PC-9 (cell line): ENCODE measurements at regions of chr10 and their contacts with region 1.

Region 1: GRCh38 chr10:6667679-6668270 is 87.7 kb upstream of the PRKCQ start:
- DNase-seq: peak; percentile 27 to 36
- H3K4me3 ChIP-seq: no peak overlapping the region
- H3K27ac ChIP-seq: no peak overlapping the region
- H3K4me1 ChIP-seq: no peaks in the 10 kb centered on the region
- H3K27me3 ChIP-seq: no peaks in the 10 kb centered on the region
- CTCF ChIP-seq: peak; percentile 64

Region 2: GRCh38 chr10:6202684-6203330 is 465.0 kb before region 1 on chr10 and contains the start of gene PFKFB3:
- CTCF ChIA-PET with region 1: no interaction called
- POLR2A ChIA-PET with region 1: no interaction called
- intact Hi-C with region 1: loop called (anchors 10 kb)
- DNase-seq: peak; percentile 73 to 96
- H3K4me3 ChIP-seq: peak within 1 kb of the TSS; percentile 90
- H3K27ac ChIP-seq: peak within 1 kb of the TSS; percentile 55
- H3K4me1 ChIP-seq: peaks cover 14% of the 10 kb centered on the region; the same call in 1 of the 2 replicates
- H3K27me3 ChIP-seq: no peaks in the 10 kb centered on the region
- CTCF ChIP-seq: peak; percentile 81
- total RNA-seq, gene PFKFB3: 37.8 and 54.7 TPM in 2 replicates

Region 3: DNA sequence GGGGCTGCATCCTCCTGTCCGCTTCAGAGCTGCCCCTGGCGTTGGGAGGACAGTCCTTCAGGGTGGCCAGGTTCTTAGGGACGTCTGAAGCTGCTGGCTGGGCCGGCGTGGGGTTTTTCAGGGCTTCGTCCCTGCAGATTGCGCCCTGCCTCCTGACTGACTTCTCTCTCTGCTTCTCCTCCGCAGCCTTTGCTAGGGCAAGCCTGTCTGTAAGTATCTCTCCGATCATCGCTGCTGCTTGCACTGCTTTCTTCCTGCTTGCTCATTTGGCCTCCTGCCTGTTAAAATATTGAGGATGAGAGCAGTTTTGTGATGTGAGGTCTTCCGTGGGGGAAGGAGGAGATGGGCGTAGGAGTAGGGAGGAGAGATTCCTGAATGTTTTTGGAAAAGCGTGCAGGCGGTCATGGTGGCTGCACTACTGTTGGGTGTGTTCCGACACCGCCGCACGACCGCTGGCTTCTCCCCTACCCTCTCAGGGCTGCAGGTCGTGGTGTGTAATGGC is 439.7 kb before region 1 on chr10:
- CTCF ChIA-PET with region 1: no interaction called
- POLR2A ChIA-PET with region 1: no interaction called
- intact Hi-C with region 1: no loop called
- DNase-seq: no peak
- H3K4me3 ChIP-seq: no peak overlapping the region
- H3K27ac ChIP-seq: no peak overlapping the region
- H3K4me1 ChIP-seq: no peaks in the 10 kb centered on the region
- H3K27me3 ChIP-seq: no peaks in the 10 kb centered on the region
- CTCF ChIP-seq: no peak

Region 4: GRCh38 chr10:6445501-6446316 is 222.1 kb before region 1 on chr10:
- CTCF ChIA-PET with region 1: no interaction called
- POLR2A ChIA-PET with region 1: no interaction called
- intact Hi-C with region 1: loop called (anchors 2 kb)
- DNase-seq: peak in 1 of 2 experiments; percentile 15
- H3K4me3 ChIP-seq: no peak overlapping the region
- H3K27ac ChIP-seq: no peak overlapping the region
- H3K4me1 ChIP-seq: no peaks in the 10 kb centered on the region
- H3K27me3 ChIP-seq: no peaks in the 10 kb centered on the region
- CTCF ChIP-seq: peak; percentile 67

Region 5: DNA sequence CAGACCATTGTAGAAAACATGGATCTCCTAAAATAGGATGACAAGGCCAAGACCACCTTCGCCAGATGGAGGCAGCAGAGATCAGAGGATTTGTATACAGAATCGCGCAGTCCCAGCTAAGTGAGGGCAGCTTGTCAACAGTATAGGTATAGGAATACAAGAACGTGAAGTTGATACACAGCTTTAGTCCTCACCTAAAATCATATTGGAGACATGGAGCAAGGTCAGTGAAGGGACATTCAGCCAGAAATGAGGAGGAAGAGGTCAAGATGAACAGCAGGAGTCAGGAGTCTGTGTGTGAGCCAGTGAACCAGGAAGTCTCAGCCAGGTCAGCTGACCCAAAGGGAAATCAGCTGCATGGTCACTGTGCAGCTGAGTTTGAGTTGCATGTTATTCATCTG is 175.7 kb after region 1 on chr10:
- CTCF ChIA-PET with region 1: no interaction called
- POLR2A ChIA-PET with region 1: no interaction called
- intact Hi-C with region 1: no loop called
- DNase-seq: no peak
- H3K4me3 ChIP-seq: no peak overlapping the region
- H3K27ac ChIP-seq: no peak overlapping the region
- H3K4me1 ChIP-seq: no peaks in the 10 kb centered on the region
- H3K27me3 ChIP-seq: no peaks in the 10 kb centered on the region
- CTCF ChIP-seq: no peak

Region 6: GRCh38 chr10:7153750-7154149 is 486.0 kb after region 1 on chr10:
- CTCF ChIA-PET with region 1: no interaction called
- POLR2A ChIA-PET with region 1: interaction called, 19 read pairs
- intact Hi-C with region 1: no loop called
- DNase-seq: no peak
- H3K4me3 ChIP-seq: no peak overlapping the region
- H3K27ac ChIP-seq: no peak overlapping the region
- H3K4me1 ChIP-seq: no peaks in the 10 kb centered on the region
- H3K27me3 ChIP-seq: peaks cover under 1% of the 10 kb centered on the region; the same call in 1 of the 2 replicates
- CTCF ChIP-seq: no peak

Region 7: DNA sequence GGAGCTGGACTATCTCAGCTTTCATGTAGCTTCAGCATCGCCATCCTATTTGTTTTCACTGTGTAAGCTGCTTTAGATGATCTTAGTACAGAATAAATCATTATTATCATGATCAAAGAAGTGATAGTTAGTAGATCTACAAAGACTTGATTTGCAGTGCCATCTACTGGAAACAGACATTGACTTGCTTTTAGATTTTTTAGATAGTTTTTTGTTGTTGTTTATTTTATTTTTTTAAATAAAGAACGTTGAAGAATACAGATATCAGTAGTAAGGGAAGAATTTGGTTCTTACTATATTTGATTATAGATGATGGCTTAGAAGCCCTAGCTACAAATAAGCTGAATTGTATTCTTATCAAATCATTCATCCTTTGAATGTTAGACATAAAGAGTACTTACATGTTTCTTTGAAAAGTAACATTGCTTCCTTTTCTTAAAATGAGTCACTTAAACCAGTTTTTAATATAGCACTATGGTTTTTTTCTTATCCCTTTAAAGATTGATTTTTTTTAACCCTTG is 749.4 kb after region 1 on chr10:
- CTCF ChIA-PET with region 1: no interaction called
- POLR2A ChIA-PET with region 1: no interaction called
- intact Hi-C with region 1: loop called (anchors 1 kb)
- DNase-seq: no peak
- H3K4me3 ChIP-seq: no peak overlapping the region
- H3K27ac ChIP-seq: no peak overlapping the region
- H3K4me1 ChIP-seq: no peaks in the 10 kb centered on the region
- H3K27me3 ChIP-seq: peaks cover 8% of the 10 kb centered on the region; the same call in 1 of the 2 replicates
- CTCF ChIP-seq: peak; percentile 54

Region 8: DNA sequence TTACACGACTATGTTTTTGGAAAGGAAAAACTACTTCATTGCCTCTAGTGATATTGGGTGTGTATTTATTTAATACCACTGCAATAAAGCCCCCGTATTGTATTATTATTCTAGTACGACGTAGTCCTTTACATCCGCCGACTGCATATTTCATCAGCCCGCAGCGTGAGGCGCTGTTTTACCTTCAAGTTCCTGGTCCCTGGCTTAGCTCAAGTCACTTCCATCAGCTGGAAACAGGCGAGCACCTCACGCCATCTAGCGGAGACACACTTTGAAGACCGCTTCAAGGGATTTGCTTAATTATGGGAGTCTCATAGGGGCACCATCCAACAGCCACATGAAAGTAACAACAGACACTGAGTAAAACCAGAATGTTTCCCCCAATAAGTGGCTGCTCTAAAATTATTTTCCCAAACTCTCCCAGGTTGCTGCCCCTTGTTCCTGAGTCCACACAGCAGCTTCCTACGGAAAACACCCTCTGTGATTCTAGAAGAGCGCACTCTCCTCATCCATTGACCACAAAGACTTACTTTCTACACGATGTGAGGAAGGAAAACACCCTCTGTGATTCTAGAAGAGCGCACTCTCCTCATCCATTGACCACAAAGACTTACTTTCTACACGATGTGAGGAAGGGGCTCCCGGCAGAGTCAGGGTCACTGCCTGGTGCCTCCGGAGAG is 1019.6 kb after region 1 on chr10:
- CTCF ChIA-PET with region 1: no interaction called
- POLR2A ChIA-PET with region 1: no interaction called
- intact Hi-C with region 1: loop called (anchors 10 kb)
- DNase-seq: peak; percentile 55 to 63
- H3K4me3 ChIP-seq: no peak overlapping the region
- H3K27ac ChIP-seq: no peak overlapping the region
- H3K4me1 ChIP-seq: no peaks in the 10 kb centered on the region
- H3K27me3 ChIP-seq: peaks cover 4% of the 10 kb centered on the region; the same call in 1 of the 2 replicates
- CTCF ChIP-seq: peak; percentile 71